GM12878 (cell line): ENCODE measurements at regions of chr7 and their contacts with region 1.

Region 1: DNA sequence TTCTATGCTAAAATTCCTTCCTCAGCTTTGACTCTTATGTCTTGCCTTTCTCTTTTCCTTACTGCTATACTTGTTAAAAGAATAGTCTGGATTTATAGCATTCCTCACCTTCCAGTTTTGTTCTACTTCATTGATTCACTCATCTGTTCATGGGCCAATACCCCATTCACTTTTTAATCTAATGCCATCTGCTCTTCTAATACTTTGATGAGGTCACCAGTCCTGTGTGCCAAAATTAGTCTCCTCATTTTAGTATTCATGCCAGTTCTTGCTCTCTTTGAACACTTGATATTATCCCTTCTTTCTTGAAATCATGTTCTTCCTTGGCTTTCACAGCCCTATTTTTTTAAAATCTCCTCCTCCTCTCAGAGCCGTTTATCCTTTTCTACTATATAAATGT is 19.4 kb downstream of the STK17A start:
- DNase-seq: no peak
- ATAC-seq: no peak
- H3K4me3 ChIP-seq: no peak overlapping the region
- H3K27ac ChIP-seq: no peak overlapping the region
- H3K4me1 ChIP-seq: peaks cover 4% of the 10 kb centered on the region; the same call in 1 of the 2 replicates
- H3K27me3 ChIP-seq: no peaks in the 10 kb centered on the region
- CTCF ChIP-seq: no peak
- EP300 ChIP-seq: no peak
- POLR2A ChIP-seq: no peak
- RAD21 ChIP-seq: no peak

Region 2: GRCh38 chr7:43619213-43620012 is 17.1 kb after region 1 on chr7:
- CTCF ChIA-PET with region 1: interaction called, 8 read pairs
- POLR2A ChIA-PET with region 1: interaction called, 7 read pairs
- RAD21 ChIA-PET with region 1: no interaction called
- SMC1A ChIA-PET with region 1: interaction called, 14 read pairs
- in situ Hi-C with region 1: no loop called
- intact Hi-C with region 1: no loop called
- DNase-seq: no peak
- ATAC-seq: no peak
- H3K4me3 ChIP-seq: no peak overlapping the region
- H3K27ac ChIP-seq: no peak overlapping the region
- H3K4me1 ChIP-seq: peaks cover 17% of the 10 kb centered on the region
- H3K27me3 ChIP-seq: no peaks in the 10 kb centered on the region
- CTCF ChIP-seq: no peak
- EP300 ChIP-seq: no peak
- POLR2A ChIP-seq: no peak
- RAD21 ChIP-seq: no peak

Region 3: DNA sequence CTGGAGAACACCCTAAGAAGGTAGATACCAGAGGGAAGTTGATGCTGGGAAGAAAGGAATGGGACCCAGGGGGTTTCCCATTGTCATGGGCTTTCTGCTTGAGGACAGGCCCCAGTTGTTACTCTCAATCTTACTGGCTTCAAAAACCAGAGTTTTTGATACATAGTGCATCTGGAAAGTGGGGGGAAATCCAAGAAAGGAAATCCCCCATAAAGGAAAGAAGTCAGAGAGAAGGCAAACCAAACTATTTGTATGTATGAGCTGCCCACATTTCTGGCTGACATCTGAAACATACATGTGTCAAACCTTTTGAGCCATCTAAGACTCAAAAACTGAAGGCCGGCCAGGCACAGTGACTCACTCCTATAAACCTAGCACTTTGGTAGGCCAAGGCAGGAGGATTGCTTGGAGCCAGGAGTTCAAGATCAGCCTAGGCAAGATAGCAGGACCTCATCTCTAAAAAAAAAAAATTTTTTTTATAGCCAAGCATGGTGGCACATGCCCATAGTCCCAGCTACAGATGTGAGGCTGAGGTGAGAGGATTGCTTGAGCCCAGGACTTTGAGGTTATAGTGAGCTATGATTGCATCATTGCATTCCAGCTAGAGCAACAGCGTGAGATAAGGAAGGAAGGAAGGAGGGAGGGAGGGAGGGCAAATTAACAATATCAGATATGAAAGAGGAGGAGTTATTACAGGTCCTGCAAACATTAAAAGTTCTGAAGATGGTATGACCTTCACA is 133.7 kb after region 1 on chr7:
- CTCF ChIA-PET with region 1: no interaction called
- POLR2A ChIA-PET with region 1: no interaction called
- RAD21 ChIA-PET with region 1: no interaction called
- SMC1A ChIA-PET with region 1: no interaction called
- in situ Hi-C with region 1: no loop called
- intact Hi-C with region 1: no loop called
- DNase-seq: peak; percentile 90
- ATAC-seq: peak; percentile 90
- H3K4me3 ChIP-seq: no peak overlapping the region
- H3K27ac ChIP-seq: peak overlapping the region; percentile 58
- H3K4me1 ChIP-seq: peaks cover 31% of the 10 kb centered on the region
- H3K27me3 ChIP-seq: no peaks in the 10 kb centered on the region
- CTCF ChIP-seq: no peak
- EP300 ChIP-seq: peak; percentile 67 to 81; a peak in 3 of 4 replicates
- POLR2A ChIP-seq: no peak
- RAD21 ChIP-seq: 0 out of 2 replicates have a peak, but pooled peaks have one; percentile 1